ENCODE measurements at regions of chr1 and their contacts with region 1.

Region 1: GRCh38 chr1:178749581-178750166 is 24.6 kb downstream of the RALGPS2 start:
- DNase-seq: no peak
- ATAC-seq: no peak
- H3K4me3 ChIP-seq: no peak overlapping the region
- H3K4me3 Mint-ChIP-seq: no peak overlapping the region
- H3K27ac ChIP-seq: no peak overlapping the region
- H3K27ac Mint-ChIP-seq: no peak overlapping the region
- H3K4me1 ChIP-seq: no peaks in the 10 kb centered on the region
- H3K4me1 Mint-ChIP-seq: peaks cover 0 to 8% (median 0%) of the 10 kb centered on the region in 7 donors
- H3K27me3 ChIP-seq: no peaks in the 10 kb centered on the region
- H3K27me3 Mint-ChIP-seq: no peaks in the 10 kb centered on the region

Region 2: GRCh38 chr1:178126790-178127189 is 622.9 kb before region 1 on chr1:
- CTCF ChIA-PET with region 1: no interaction called
- POLR2A ChIA-PET with region 1: no interaction called
- intact Hi-C with region 1: no loop called
- DNase-seq: no peak
- ATAC-seq: peak; percentile 36
- H3K4me3 ChIP-seq: no peak overlapping the region
- H3K4me3 Mint-ChIP-seq: no peak overlapping the region
- H3K27ac ChIP-seq: no peak overlapping the region
- H3K27ac Mint-ChIP-seq: no peak overlapping the region
- H3K4me1 ChIP-seq: no peaks in the 10 kb centered on the region
- H3K4me1 Mint-ChIP-seq: peaks cover 0 to 2% (median 0%) of the 10 kb centered on the region in 7 donors
- H3K27me3 ChIP-seq: no peaks in the 10 kb centered on the region
- H3K27me3 Mint-ChIP-seq: no peaks in the 10 kb centered on the region

Region 3: GRCh38 chr1:178310685-178311105 is 439.0 kb before region 1 on chr1:
- CTCF ChIA-PET with region 1: no interaction called
- POLR2A ChIA-PET with region 1: no interaction called
- intact Hi-C with region 1: loop called in 1 of 2 experiments (anchors 2 kb)
- DNase-seq: peak in 5 of 9 donors; percentile 13 to 42 (median 22)
- ATAC-seq: peak; percentile 69
- H3K4me3 ChIP-seq: no peak overlapping the region
- H3K4me3 Mint-ChIP-seq: no peak overlapping the region
- H3K27ac ChIP-seq: no peak overlapping the region
- H3K27ac Mint-ChIP-seq: no peak overlapping the region
- H3K4me1 ChIP-seq: no peaks in the 10 kb centered on the region
- H3K4me1 Mint-ChIP-seq: no peaks in the 10 kb centered on the region
- H3K27me3 ChIP-seq: no peaks in the 10 kb centered on the region
- H3K27me3 Mint-ChIP-seq: peaks cover 0 to 16% (median 8%) of the 10 kb centered on the region in 5 donors

Region 4: DNA sequence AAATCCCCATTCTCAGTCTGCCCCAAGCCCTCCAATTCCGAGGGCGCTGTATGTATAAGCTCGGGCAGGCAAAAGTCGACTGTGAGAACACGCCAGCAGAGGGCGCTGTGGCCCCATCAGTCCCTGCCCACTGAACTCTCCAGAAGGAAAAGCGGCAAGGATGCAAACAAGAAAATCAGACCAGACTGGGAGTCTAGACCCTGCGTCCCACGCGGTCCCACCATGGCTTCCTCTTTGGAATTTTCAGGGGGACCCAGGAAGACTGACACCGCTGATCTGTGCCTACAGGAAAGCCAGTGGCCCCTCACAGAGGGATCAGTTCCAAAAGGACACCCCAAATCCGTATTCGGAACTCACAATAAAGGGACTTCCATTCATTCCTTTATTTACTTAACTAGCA is 217.3 kb before region 1 on chr1:
- CTCF ChIA-PET with region 1: interaction called, 21 read pairs
- POLR2A ChIA-PET with region 1: no interaction called
- intact Hi-C with region 1: loop called (anchors 1 to 2 kb)
- DNase-seq: peak; percentile 42 to 74 (median 63)
- ATAC-seq: peak; percentile 92
- H3K4me3 ChIP-seq: no peak overlapping the region
- H3K4me3 Mint-ChIP-seq: peak overlapping the region in 1 of 10 donors; percentile 27
- H3K27ac ChIP-seq: no peak overlapping the region
- H3K27ac Mint-ChIP-seq: no peak overlapping the region
- H3K4me1 ChIP-seq: peaks cover 0 to 6% of the 10 kb centered on the region in 2 donors
- H3K4me1 Mint-ChIP-seq: peaks cover 0 to 4% (median 4%) of the 10 kb centered on the region in 7 donors
- H3K27me3 ChIP-seq: no peaks in the 10 kb centered on the region
- H3K27me3 Mint-ChIP-seq: peaks cover 0 to 2% (median 0%) of the 10 kb centered on the region in 5 donors

Region 5: GRCh38 chr1:178542560-178543356 is 206.9 kb before region 1 on chr1:
- CTCF ChIA-PET with region 1: interaction called, 22 read pairs
- POLR2A ChIA-PET with region 1: no interaction called
- intact Hi-C with region 1: loop called (anchors 1 kb)
- DNase-seq: peak; percentile 61 to 98 (median 87)
- ATAC-seq: peak; percentile 96
- H3K4me3 ChIP-seq: peak overlapping the region; percentile 99
- H3K4me3 Mint-ChIP-seq: peak overlapping the region; percentile 89 to 96 (median 92)
- H3K27ac ChIP-seq: peak overlapping the region; percentile 56
- H3K27ac Mint-ChIP-seq: peak overlapping the region; percentile 32 to 88 (median 83)
- H3K4me1 ChIP-seq: peaks cover 0 to 5% of the 10 kb centered on the region in 2 donors
- H3K4me1 Mint-ChIP-seq: peaks cover 0 to 15% (median 10%) of the 10 kb centered on the region in 7 donors
- H3K27me3 ChIP-seq: no peaks in the 10 kb centered on the region
- H3K27me3 Mint-ChIP-seq: no peaks in the 10 kb centered on the region

Region 6: DNA sequence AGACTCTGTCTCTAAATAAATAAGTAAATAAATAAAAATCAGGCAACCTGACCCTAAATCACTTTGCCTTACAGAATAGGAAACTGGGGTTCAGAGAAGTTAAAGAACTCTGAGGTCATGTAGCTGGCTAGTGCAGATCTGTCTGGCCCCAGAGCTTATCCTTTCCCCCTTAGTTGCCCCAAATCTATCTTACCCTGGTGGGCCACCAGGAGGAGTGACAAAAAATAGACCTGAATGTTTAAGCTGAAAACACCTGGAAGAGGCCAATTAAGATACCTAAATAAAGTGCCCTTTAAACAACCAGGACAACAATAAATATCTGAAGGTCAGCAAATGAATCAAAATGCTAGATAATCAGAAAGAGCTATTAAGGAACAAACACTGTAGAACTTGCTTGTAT is 177.1 kb before region 1 on chr1:
- CTCF ChIA-PET with region 1: no interaction called
- POLR2A ChIA-PET with region 1: no interaction called
- intact Hi-C with region 1: loop called in 1 of 2 experiments (anchors 1 kb)
- DNase-seq: no peak
- ATAC-seq: no peak
- H3K4me3 ChIP-seq: no peak overlapping the region
- H3K4me3 Mint-ChIP-seq: no peak overlapping the region
- H3K27ac ChIP-seq: no peak overlapping the region
- H3K27ac Mint-ChIP-seq: no peak overlapping the region
- H3K4me1 ChIP-seq: no peaks in the 10 kb centered on the region
- H3K4me1 Mint-ChIP-seq: no peaks in the 10 kb centered on the region
- H3K27me3 ChIP-seq: no peaks in the 10 kb centered on the region
- H3K27me3 Mint-ChIP-seq: peaks cover 0 to 8% (median 5%) of the 10 kb centered on the region in 5 donors

Region 7: DNA sequence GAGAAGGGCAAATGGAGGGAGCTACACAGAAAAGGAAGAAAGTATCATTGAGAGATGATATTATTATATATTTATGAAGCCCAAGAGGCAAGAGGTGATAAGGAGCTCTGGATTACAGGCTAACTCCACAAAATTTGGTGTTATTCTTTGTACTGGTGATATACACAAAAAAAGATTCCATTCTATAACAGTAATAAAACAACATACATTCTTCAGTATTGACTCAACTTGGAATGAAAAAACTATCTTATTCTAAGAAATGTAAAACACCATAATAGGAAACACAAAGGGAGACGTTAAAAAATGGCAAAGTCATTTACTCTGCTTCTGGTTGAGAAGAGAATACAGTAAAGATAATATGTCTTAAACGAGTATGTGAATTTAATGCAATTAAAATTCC is 137.4 kb before region 1 on chr1:
- CTCF ChIA-PET with region 1: no interaction called
- POLR2A ChIA-PET with region 1: no interaction called
- intact Hi-C with region 1: loop called in 1 of 2 experiments (anchors 5 kb)
- DNase-seq: no peak
- ATAC-seq: no peak
- H3K4me3 ChIP-seq: no peak overlapping the region
- H3K4me3 Mint-ChIP-seq: no peak overlapping the region
- H3K27ac ChIP-seq: no peak overlapping the region
- H3K27ac Mint-ChIP-seq: peak overlapping the region in 1 of 9 donors; percentile 35
- H3K4me1 ChIP-seq: no peaks in the 10 kb centered on the region
- H3K4me1 Mint-ChIP-seq: peaks cover 0 to 5% (median 0%) of the 10 kb centered on the region in 7 donors
- H3K27me3 ChIP-seq: no peaks in the 10 kb centered on the region
- H3K27me3 Mint-ChIP-seq: peaks cover 0 to 6% (median 4%) of the 10 kb centered on the region in 5 donors

Region 8: DNA sequence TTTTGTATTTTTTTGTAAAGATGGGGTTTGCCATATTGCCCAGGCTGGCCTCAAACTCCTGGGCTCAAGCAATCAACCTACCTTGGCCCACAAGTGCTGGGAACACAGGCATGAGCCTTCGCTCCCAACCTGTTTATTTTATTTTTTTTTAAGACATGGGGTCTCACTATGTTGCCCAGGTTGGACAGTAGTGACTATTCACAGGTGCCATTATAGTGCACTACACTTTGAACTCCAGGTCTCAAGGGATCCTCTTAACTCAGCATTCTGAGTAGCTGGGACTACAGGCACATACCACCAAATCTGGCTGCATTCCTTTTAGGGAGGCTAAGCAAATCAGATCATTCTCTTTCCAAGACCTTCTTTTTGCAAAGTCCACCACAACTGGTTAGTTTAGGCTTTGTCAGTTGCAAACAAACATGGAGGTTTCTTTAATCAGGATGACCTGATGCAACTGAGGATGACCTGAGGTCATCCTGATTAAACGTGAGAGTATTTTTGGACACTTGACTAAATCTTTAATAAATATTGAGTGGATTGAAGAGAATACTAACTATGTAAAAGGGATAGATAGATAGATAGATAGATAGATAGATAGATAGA is 54.6 kb before region 1 on chr1:
- CTCF ChIA-PET with region 1: no interaction called
- POLR2A ChIA-PET with region 1: no interaction called
- intact Hi-C with region 1: loop called in 1 of 2 experiments (anchors 5 kb)
- DNase-seq: no peak
- ATAC-seq: no peak
- H3K4me3 ChIP-seq: no peak overlapping the region
- H3K4me3 Mint-ChIP-seq: no peak overlapping the region
- H3K27ac ChIP-seq: no peak overlapping the region
- H3K27ac Mint-ChIP-seq: no peak overlapping the region
- H3K4me1 ChIP-seq: no peaks in the 10 kb centered on the region
- H3K4me1 Mint-ChIP-seq: no peaks in the 10 kb centered on the region
- H3K27me3 ChIP-seq: no peaks in the 10 kb centered on the region
- H3K27me3 Mint-ChIP-seq: peaks cover 0 to 7% (median under 1%) of the 10 kb centered on the region in 5 donors

Measured in naive thymus-derived CD4-positive, alpha-beta T cell (primary cell).